PC-9 (cell line): ENCODE measurements at regions of chr1 and their contacts with region 1.

Region 1: DNA sequence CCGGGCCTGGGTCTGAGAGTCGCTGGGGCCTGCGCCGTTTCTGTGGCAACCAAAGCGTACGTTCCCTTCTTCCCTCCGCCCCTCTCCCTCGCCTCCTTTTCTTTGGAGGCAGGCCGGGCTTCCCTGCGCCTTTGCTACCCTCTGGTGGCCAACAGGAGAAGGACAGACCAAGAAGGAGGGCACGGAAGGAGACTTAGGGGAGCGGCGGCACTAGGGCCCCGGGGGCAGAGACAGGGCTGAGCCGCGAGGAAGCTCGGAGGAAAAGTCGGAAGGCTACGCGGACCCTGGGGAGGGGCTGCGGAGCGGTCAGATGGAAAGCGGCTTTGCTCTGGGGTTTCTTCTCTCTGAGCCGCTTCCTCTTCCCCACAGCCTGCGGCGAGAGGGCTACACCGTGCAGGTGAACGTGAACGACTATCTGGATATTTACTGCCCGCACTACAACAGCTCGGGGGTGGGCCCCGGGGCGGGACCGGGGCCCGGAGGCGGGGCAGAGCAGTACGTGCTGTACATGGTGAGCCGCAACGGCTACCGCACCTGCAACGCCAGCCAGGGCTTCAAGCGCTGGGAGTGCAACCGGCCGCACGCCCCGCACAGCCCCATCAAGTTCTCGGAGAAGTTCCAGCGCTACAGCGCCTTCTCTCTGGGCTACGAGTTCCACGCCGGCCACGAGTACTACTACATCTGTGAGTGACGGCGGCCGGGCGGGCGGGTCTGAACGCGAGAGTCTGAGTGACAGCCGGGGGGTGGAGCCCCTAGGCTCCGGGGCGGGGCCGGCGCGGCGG is 6.3 kb downstream of the EFNA3 start:
- DNase-seq: peak; percentile 81 to 92
- H3K4me3 ChIP-seq: peak overlapping the region; percentile 70
- H3K27ac ChIP-seq: peak overlapping the region; percentile 72
- H3K4me1 ChIP-seq: peaks cover 50% of the 10 kb centered on the region
- H3K27me3 ChIP-seq: peaks cover 23% of the 10 kb centered on the region
- CTCF ChIP-seq: peak; percentile 94

Region 2: GRCh38 chr1:154669464-154670282 is 415.2 kb before region 1 on chr1:
- CTCF ChIA-PET with region 1: no interaction called
- POLR2A ChIA-PET with region 1: no interaction called
- intact Hi-C with region 1: loop called (anchors 1 kb)
- DNase-seq: peak; percentile 62 to 70
- H3K4me3 ChIP-seq: no peak overlapping the region
- H3K27ac ChIP-seq: no peak overlapping the region
- H3K4me1 ChIP-seq: no peaks in the 10 kb centered on the region
- H3K27me3 ChIP-seq: peaks cover 9% of the 10 kb centered on the region; the same call in 1 of the 2 replicates
- CTCF ChIP-seq: peak; percentile 84

Region 3: DNA sequence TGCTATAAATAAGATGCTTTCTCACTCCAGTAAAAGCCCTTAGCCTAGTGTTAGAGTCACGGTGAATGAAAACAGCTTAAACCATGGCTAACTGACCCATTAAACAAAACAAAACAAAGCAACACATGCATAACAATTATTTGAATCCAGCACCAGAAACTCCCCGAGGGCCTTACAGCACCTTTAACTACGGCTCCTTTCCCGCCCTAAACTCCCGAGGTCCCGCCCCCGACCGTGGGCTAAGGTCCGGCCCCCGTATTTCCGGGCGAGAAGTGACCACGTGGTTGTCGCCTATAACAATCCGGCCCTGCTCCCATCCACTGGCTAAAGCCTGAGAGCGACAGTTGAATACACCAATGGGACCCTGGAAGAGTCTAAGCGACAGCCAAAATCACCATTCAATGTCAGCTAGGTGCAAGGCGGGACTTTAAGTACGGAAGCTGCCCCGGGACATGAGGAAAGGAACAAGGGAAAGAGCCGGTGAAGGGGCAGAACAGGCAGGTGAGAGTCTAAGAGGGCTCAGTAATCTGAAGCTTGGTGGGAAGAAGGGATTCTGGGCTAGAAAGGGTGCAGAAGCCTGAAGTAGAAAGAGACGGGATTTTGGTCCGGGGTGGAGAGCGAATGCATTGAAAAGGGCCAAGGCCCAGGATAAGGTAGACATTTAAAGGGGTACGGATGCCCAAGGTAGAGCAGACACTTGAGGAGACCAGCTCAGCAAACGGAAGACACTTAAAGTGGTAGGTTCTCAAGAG is 101.8 kb before region 1 on chr1 and contains the start of gene FLAD1:
- CTCF ChIA-PET with region 1: interaction called, 3 read pairs
- POLR2A ChIA-PET with region 1: interaction called, 11 read pairs
- intact Hi-C with region 1: no loop called
- DNase-seq: peak; percentile 95 to 99
- H3K4me3 ChIP-seq: peak within 1 kb of the TSS; percentile 72
- H3K27ac ChIP-seq: peak within 1 kb of the TSS; percentile 21; the same call in 1 of the 2 replicates
- H3K4me1 ChIP-seq: peaks cover 32% of the 10 kb centered on the region
- H3K27me3 ChIP-seq: no peaks in the 10 kb centered on the region
- CTCF ChIP-seq: no peak
- total RNA-seq, gene FLAD1: 47.9 and 54.2 TPM in 2 replicates

Region 4: GRCh38 chr1:155044812-155045690 is 39.9 kb before region 1 on chr1:
- CTCF ChIA-PET with region 1: interaction called, 5 read pairs
- POLR2A ChIA-PET with region 1: no interaction called
- intact Hi-C with region 1: loop called (anchors 2 kb)
- DNase-seq: peak; percentile 79
- H3K4me3 ChIP-seq: no peak overlapping the region
- H3K27ac ChIP-seq: no peak overlapping the region
- H3K4me1 ChIP-seq: peaks cover 24% of the 10 kb centered on the region
- H3K27me3 ChIP-seq: no peaks in the 10 kb centered on the region
- CTCF ChIP-seq: peak; percentile 73

Region 5: GRCh38 chr1:155167166-155168104 is 82.5 kb after region 1 on chr1:
- CTCF ChIA-PET with region 1: interaction called, 13 read pairs
- POLR2A ChIA-PET with region 1: interaction called, 3 read pairs
- intact Hi-C with region 1: loop called (anchors 1 kb)
- DNase-seq: peak; percentile 66 to 83
- H3K4me3 ChIP-seq: peak overlapping the region; percentile 33; the same call in 1 of the 2 replicates
- H3K27ac ChIP-seq: no peak overlapping the region
- H3K4me1 ChIP-seq: peaks cover 12% of the 10 kb centered on the region
- H3K27me3 ChIP-seq: no peaks in the 10 kb centered on the region
- CTCF ChIP-seq: peak; percentile 98

Region 6: GRCh38 chr1:155287987-155288543 is 203.2 kb after region 1 on chr1:
- CTCF ChIA-PET with region 1: no interaction called
- POLR2A ChIA-PET with region 1: no interaction called
- intact Hi-C with region 1: no loop called
- DNase-seq: no peak
- H3K4me3 ChIP-seq: no peak overlapping the region
- H3K27ac ChIP-seq: no peak overlapping the region
- H3K4me1 ChIP-seq: no peaks in the 10 kb centered on the region
- H3K27me3 ChIP-seq: no peaks in the 10 kb centered on the region
- CTCF ChIP-seq: no peak